ENCODE measurements at regions of chr6 and their contacts with region 1.

Region 1: GRCh38 chr6:35573495-35574110 is 60.9 kb upstream of the TULP1 start:
- DNase-seq: no peak
- H3K4me3 ChIP-seq: no peak overlapping the region
- H3K27ac ChIP-seq: no peak overlapping the region
- H3K4me1 ChIP-seq: no peaks in the 10 kb centered on the region
- H3K27me3 ChIP-seq: no peaks in the 10 kb centered on the region
- CTCF ChIP-seq: no peak
- POLR2A ChIP-seq: no peak

Region 2: GRCh38 chr6:35354361-35355135 is 219.1 kb before region 1 on chr6:
- intact Hi-C with region 1: no loop called
- DNase-seq: no peak
- H3K4me3 ChIP-seq: no peak overlapping the region
- H3K27ac ChIP-seq: no peak overlapping the region
- H3K4me1 ChIP-seq: no peaks in the 10 kb centered on the region
- H3K27me3 ChIP-seq: no peaks in the 10 kb centered on the region
- CTCF ChIP-seq: no peak
- POLR2A ChIP-seq: no peak

Region 3: GRCh38 chr6:35522660-35523658 is 50.6 kb before region 1 on chr6:
- intact Hi-C with region 1: loop called (anchors 10 kb)
- DNase-seq: peak; percentile 76 to 78
- H3K4me3 ChIP-seq: peak overlapping the region; percentile 11 to 14
- H3K27ac ChIP-seq: no peak overlapping the region
- H3K4me1 ChIP-seq: no peaks in the 10 kb centered on the region
- H3K27me3 ChIP-seq: no peaks in the 10 kb centered on the region
- CTCF ChIP-seq: peak; percentile 88 to 100 (median 95)
- POLR2A ChIP-seq: no peak